Psoas muscle (tissue), 8 donors: ENCODE measurements at regions of chr9 and their contacts with region 1.

Region 1: DNA sequence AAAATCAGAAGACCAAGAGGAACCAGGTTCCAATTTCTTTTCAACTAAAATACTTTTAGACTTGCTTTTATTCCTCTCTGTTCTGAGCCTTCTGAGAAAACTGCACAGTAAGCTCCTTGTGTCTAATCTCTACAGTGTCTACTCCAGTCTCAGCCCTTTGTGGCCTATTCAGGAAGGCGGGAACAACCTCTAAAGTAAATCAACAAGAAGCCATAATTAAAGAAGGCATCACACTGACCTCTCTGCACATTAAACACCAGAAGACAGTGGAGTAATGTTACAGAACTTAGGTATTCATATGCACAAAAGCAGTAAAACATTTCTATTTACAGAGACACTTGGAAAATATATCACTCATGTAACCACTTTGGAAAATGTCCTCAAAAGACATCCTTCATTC is 14.9 kb downstream of the XPA start:
- DNase-seq: no peak
- ATAC-seq: no peak
- H3K4me3 ChIP-seq: no peak overlapping the region
- H3K27ac ChIP-seq: no peak overlapping the region
- H3K4me1 ChIP-seq: no peaks in the 10 kb centered on the region
- H3K27me3 ChIP-seq: no peaks in the 10 kb centered on the region
- CTCF ChIP-seq: no peak

Region 2: DNA sequence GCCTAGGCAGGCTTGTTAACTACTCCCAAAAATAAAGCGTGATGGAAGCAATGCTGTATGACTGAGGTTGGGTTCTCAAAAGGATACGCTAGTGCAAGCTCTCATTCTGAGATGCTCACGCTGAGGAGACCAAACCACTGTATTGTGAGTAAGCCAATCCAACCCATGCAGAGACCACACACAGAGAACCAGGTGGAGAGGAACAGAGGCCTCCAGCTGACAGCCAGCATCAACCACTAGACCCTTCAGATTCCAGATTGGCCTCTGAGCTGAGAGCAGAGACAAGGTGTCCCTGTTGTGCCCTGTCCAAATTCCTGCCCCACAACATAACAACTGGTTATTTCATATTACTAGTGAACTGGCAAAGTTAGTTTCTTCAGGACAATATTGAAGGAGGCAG is 53.6 kb before region 1 on chr9:
- intact Hi-C with region 1: no loop called
- DNase-seq: no peak
- ATAC-seq: no peak
- H3K4me3 ChIP-seq: no peak overlapping the region
- H3K27ac ChIP-seq: no peak overlapping the region
- H3K4me1 ChIP-seq: peaks cover 52% of the 10 kb centered on the region
- H3K27me3 ChIP-seq: no peaks in the 10 kb centered on the region
- CTCF ChIP-seq: no peak

Region 3: DNA sequence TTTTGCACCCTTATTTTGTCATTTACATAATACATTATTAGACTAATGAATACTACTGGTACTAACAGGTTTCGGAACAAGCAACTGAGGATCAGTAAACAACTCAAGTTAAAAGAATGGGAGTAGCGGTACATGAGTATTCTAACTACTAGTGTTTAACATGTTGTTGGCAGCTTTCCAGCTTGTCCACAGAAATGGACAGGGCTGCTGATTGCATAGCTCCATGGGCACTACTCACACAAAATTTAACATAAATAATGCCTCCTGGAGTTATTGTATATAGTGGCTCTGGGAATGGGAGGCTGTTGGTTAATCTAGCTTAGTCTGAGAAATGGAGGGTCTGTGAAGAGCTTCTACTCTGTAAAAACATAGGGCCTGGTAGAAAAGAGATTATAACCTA is 41.9 kb before region 1 on chr9:
- intact Hi-C with region 1: loop called in 1 of 2 experiments (anchors 5 kb)
- DNase-seq: no peak
- ATAC-seq: no peak
- H3K4me3 ChIP-seq: no peak overlapping the region
- H3K27ac ChIP-seq: no peak overlapping the region
- H3K4me1 ChIP-seq: peaks cover 50% of the 10 kb centered on the region
- H3K27me3 ChIP-seq: no peaks in the 10 kb centered on the region
- CTCF ChIP-seq: no peak

Region 4: GRCh38 chr9:97906236-97906831 is 224.1 kb after region 1 on chr9:
- intact Hi-C with region 1: no loop called
- DNase-seq: peak; percentile 44 to 58
- ATAC-seq: peak; percentile 40 to 65 (median 52)
- H3K4me3 ChIP-seq: no peak overlapping the region
- H3K27ac ChIP-seq: no peak overlapping the region
- H3K4me1 ChIP-seq: peaks cover 9% of the 10 kb centered on the region
- H3K27me3 ChIP-seq: no peaks in the 10 kb centered on the region
- CTCF ChIP-seq: no peak